Panc1 (cell line): ENCODE measurements at regions of chr22 and their contacts with region 1.

Region 1: DNA sequence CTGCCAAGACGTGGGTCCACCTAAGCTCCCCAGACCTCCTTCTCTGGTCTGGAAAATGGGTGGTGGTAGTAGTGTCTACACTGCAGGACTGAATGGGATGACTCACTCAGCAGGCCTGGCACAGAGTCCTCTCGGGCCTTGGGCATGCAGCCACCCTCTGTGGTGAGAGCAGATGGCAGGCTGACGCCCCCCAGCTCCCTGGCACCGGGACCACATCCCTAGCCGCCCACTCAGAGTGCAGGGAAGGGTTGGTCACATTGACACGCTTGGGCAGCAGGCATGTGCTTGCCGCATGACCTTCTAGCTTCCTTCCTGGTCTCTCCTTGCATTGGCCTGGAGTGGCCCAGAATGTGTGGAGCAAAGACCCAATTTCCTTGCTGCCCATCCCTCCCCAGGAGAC is 30.7 kb upstream of the PRODH start:
- DNase-seq: no peak
- ATAC-seq: no peak
- H3K4me3 ChIP-seq: no peak overlapping the region
- H3K27ac ChIP-seq: no peak overlapping the region
- H3K4me1 ChIP-seq: no peaks in the 10 kb centered on the region
- H3K27me3 ChIP-seq: no peaks in the 10 kb centered on the region
- CTCF ChIP-seq: no peak

Region 2: GRCh38 chr22:19201869-19202798 is 235.4 kb after region 1 on chr22:
- CTCF ChIA-PET with region 1: no interaction called
- POLR2A ChIA-PET with region 1: no interaction called
- in situ Hi-C with region 1: no loop called
- intact Hi-C with region 1: no loop called
- DNase-seq: no peak
- ATAC-seq: no peak
- H3K4me3 ChIP-seq: no peak overlapping the region
- H3K27ac ChIP-seq: no peak overlapping the region
- H3K4me1 ChIP-seq: no peaks in the 10 kb centered on the region
- H3K27me3 ChIP-seq: no peaks in the 10 kb centered on the region
- CTCF ChIP-seq: no peak

Region 3: GRCh38 chr22:20271113-20271994 is 1304.6 kb after region 1 on chr22:
- CTCF ChIA-PET with region 1: interaction called, 16 read pairs
- POLR2A ChIA-PET with region 1: no interaction called
- in situ Hi-C with region 1: no loop called
- intact Hi-C with region 1: no loop called
- DNase-seq: no peak
- ATAC-seq: no peak
- H3K4me3 ChIP-seq: no peak overlapping the region
- H3K27ac ChIP-seq: no peak overlapping the region
- H3K4me1 ChIP-seq: no peaks in the 10 kb centered on the region
- H3K27me3 ChIP-seq: no peaks in the 10 kb centered on the region
- CTCF ChIP-seq: no peak